ENCODE measurements at regions of chr6 and their contacts with region 1.

Region 1: DNA sequence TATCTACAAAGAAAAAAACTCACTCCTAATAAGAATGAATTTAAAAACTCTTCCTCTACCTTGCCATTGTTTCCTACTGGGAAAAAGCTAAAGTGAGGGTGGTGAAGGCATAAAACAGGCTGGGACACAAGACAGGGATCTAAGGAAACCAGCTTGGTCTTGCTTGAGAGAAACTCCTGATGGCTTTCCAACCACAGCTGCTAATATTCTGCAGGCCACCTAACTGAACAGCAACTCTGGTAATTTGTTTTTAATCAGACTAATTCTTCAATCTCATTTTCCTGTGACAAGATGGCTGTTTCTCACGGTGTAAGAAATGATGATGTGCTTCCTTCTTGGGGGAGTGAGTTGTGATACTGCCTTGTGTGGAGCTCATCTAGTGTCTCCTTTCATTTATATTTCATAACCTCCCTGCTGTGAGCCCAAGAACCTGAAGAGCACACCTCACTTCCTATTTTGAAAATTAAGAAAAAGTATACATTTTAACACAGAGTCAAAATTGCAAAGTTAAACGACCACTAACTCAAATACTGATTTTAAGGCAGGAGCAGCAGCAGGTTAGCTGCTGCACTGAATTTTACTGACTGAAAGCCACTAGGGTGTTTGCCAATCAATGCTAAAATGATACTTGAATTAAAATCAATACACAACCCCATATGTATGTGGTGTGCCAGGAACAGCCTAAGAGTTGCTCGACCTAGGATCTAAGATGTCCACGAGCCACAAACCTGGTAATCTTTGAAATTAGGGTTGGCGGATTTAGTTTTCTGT is 58.0 kb downstream of the BACH2 start:
- DNase-seq: no peak
- H3K4me3 Mint-ChIP-seq: no peak overlapping the region
- H3K27ac Mint-ChIP-seq: peak overlapping the region; percentile 36
- H3K4me1 Mint-ChIP-seq: peaks cover 62% of the 10 kb centered on the region
- H3K27me3 Mint-ChIP-seq: no peaks in the 10 kb centered on the region

Region 2: DNA sequence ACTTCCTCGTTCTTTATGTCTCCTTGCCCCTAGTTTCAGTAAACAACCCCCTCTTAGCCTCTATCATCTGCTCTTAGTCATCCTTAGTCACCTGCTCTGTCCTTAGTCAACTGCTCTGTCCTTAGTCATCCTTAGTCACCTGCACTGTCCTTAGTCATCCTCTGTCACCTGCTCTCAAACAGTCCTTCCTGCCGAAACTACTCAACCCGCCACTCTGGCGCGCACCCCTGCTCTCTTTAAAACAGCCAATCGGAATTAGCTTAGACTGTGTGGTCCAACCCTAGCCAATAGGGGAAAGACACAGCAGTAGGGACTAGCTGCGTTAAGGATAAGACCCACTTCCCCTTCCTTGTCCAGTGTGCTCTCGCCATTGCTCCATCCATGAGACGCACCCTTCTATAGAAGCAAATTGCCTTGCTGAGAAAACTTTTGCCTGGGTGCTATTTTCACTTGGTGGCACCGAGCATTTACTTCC is 15.9 kb before region 1 on chr6:
- CTCF ChIA-PET with region 1: no interaction called
- POLR2A ChIA-PET with region 1: interaction called, 4 read pairs
- intact Hi-C with region 1: loop called (anchors 1 kb)
- DNase-seq: peak; percentile 71
- H3K4me3 Mint-ChIP-seq: no peak overlapping the region
- H3K27ac Mint-ChIP-seq: peak overlapping the region; percentile 43
- H3K4me1 Mint-ChIP-seq: peaks cover 54% of the 10 kb centered on the region
- H3K27me3 Mint-ChIP-seq: no peaks in the 10 kb centered on the region

Region 3: GRCh38 chr6:90413867-90414266 is 175.2 kb after region 1 on chr6:
- CTCF ChIA-PET with region 1: no interaction called
- POLR2A ChIA-PET with region 1: no interaction called
- intact Hi-C with region 1: no loop called
- DNase-seq: peak; percentile 92
- H3K4me3 Mint-ChIP-seq: peak overlapping the region; percentile 64
- H3K27ac Mint-ChIP-seq: peak overlapping the region; percentile 93
- H3K4me1 Mint-ChIP-seq: peaks cover 71% of the 10 kb centered on the region
- H3K27me3 Mint-ChIP-seq: no peaks in the 10 kb centered on the region